ENCODE measurements at regions of chr2 and their contacts with region 1.

Region 1: GRCh38 chr2:161217597-161218185 is 57.5 kb downstream of the TANK start:
- DNase-seq: no peak
- CTCF ChIP-seq: no peak

Region 2: GRCh38 chr2:161228511-161229240 is 11.0 kb after region 1 on chr2:
- CTCF ChIA-PET with region 1: interaction called, 23 read pairs
- POLR2A ChIA-PET with region 1: no interaction called
- DNase-seq: no peak
- CTCF ChIP-seq: no peak